ENCODE measurements at regions of chr6 and their contacts with region 1.

Region 1: DNA sequence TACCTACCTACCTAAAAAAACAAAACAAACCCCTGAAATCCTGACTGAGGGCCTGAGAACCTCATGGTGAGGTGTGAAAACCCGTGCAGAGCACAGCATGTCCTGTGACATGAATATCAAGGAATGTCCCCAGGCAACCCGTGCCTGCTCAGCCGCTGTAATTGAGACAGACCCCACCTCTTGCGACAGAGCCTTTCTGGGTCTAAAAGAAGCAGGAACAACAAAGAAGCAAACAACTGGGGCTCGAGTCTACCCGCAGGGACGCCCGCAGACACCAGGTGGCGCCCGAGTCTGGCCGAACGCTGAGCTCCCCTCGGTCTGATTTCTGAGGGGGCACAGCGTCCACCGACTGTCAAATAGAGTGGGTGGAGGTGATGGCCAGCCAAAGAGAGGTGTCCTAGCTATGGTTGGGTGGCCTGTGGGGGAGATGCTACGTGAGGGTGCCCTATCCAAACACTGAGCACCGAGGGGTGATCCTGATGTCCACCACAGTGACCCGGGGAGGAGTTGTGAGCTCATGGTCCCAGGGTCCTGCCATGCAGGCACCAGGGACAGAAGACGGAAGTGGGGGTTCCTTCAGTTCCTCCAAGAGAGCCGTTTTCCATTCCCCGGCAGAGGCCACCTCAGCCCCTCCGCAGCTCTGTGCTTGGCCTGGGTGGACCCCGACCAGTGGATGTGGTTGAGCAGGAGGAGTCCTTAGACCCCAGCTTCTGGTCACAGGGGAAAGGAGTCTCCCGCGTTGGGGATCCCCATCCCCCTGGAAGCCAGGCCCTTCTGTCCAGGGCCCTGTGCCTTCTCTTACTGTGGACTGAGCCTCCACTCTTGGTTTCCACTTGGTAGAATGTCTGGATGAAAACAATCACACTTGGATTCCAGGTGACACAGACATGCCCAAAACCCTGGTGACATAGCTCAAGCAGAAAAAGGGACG is 268.2 kb downstream of the CDC5L start:
- DNase-seq: peak; percentile 79
- H3K4me3 Mint-ChIP-seq: peak overlapping the region; percentile 25
- H3K27ac Mint-ChIP-seq: peak overlapping the region; percentile 83
- H3K4me1 Mint-ChIP-seq: peaks cover 11% of the 10 kb centered on the region
- H3K27me3 Mint-ChIP-seq: peaks cover 29% of the 10 kb centered on the region

Region 2: DNA sequence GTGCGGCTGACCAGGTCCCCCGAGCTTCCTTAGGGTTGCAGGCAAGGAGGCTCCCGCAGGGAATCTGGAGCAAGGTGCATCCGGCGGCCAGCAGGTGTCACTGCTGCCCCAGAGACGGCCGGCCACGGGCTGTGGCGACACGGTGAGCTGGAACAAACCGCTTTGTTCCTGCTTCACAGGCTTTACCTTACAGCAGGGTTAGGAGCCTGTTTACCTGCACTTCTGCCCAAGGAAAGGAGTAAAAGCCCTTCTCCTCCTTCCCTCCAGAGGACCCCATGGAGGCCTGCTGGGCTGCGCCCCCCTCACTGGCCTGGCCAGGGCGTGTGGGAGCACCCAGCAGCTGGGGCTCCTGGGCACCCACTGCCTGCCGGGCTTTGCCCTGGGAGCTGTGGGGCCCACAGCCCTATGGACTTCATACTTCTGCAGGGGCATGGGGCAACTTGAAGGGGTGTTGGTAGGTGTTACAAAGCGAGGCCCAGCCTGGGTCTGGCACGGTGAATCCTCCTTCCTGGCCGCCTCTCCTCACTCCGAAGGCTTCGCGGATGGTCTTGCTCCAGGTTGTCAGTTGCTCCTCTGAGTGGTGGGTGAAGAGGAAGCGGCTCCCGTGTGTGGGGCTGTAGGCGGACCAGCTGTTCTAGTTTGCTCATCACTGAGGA is 179.8 kb before region 1 on chr6:
- CTCF ChIA-PET with region 1: interaction called, 25 read pairs
- DNase-seq: peak; percentile 79
- H3K4me3 Mint-ChIP-seq: no peak overlapping the region
- H3K27ac Mint-ChIP-seq: no peak overlapping the region
- H3K4me1 Mint-ChIP-seq: no peaks in the 10 kb centered on the region
- H3K27me3 Mint-ChIP-seq: peaks cover 47% of the 10 kb centered on the region

Region 3: GRCh38 chr6:44563397-44563796 is 92.3 kb before region 1 on chr6:
- CTCF ChIA-PET with region 1: no interaction called
- DNase-seq: no peak
- H3K4me3 Mint-ChIP-seq: no peak overlapping the region
- H3K27ac Mint-ChIP-seq: no peak overlapping the region
- H3K4me1 Mint-ChIP-seq: peaks cover 6% of the 10 kb centered on the region
- H3K27me3 Mint-ChIP-seq: peaks cover 45% of the 10 kb centered on the region

Region 4: GRCh38 chr6:44593539-44593944 is 62.1 kb before region 1 on chr6:
- CTCF ChIA-PET with region 1: no interaction called
- DNase-seq: peak; percentile 73
- H3K4me3 Mint-ChIP-seq: no peak overlapping the region
- H3K27ac Mint-ChIP-seq: no peak overlapping the region
- H3K4me1 Mint-ChIP-seq: peaks cover 3% of the 10 kb centered on the region
- H3K27me3 Mint-ChIP-seq: peaks cover 29% of the 10 kb centered on the region

Region 5: GRCh38 chr6:44667668-44668390 is 12.2 kb after region 1 on chr6:
- CTCF ChIA-PET with region 1: interaction called, 10 read pairs
- DNase-seq: peak; percentile 51
- H3K4me3 Mint-ChIP-seq: no peak overlapping the region
- H3K27ac Mint-ChIP-seq: no peak overlapping the region
- H3K4me1 Mint-ChIP-seq: no peaks in the 10 kb centered on the region
- H3K27me3 Mint-ChIP-seq: peaks cover 30% of the 10 kb centered on the region

Region 6: DNA sequence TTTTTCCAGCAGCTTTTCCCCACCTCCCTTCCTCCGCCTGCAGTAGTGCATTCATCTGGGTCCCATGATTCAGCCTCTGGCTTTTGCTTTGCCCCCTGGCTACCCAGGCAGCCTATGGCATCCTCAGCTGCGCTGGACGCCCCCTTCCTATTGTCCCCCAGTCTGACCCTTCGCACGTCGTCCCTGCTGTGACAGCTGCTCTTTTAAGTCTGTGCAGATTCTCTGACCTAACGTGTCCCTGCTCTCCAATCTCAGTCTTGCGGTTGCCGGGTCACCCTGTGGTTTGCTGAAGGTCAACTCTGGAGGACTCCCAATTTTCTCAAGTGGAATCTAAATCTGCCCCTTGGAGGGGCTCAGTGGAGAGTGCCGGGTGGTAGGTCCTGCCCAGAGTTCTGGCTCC is 26.1 kb after region 1 on chr6:
- CTCF ChIA-PET with region 1: no interaction called
- DNase-seq: no peak
- H3K4me3 Mint-ChIP-seq: no peak overlapping the region
- H3K27ac Mint-ChIP-seq: no peak overlapping the region
- H3K4me1 Mint-ChIP-seq: no peaks in the 10 kb centered on the region
- H3K27me3 Mint-ChIP-seq: peaks cover 4% of the 10 kb centered on the region

Region 7: DNA sequence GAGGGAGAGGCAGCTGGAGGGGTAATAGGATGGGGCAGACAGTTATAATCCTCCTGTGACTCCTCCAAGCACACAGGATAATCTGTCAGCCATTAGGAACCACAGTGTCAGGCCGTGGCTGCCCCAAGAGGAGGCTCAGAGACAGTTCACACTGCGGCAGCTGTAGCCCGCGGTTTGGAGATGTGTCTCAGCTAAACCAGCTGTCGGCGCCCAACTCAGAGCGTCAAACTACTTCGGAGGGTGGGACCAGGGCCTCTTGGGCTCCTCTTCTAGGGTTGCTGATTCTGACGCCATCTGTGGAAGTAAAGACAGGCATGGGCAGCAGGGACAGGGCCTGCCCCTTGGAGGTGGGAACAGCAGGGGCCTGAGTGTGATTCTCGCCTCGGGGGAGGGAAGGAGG is 41.6 kb after region 1 on chr6:
- CTCF ChIA-PET with region 1: no interaction called
- DNase-seq: no peak
- H3K4me3 Mint-ChIP-seq: no peak overlapping the region
- H3K27ac Mint-ChIP-seq: no peak overlapping the region
- H3K4me1 Mint-ChIP-seq: peaks cover 5% of the 10 kb centered on the region
- H3K27me3 Mint-ChIP-seq: no peaks in the 10 kb centered on the region

Region 8: GRCh38 chr6:45421709-45422502 is 766.2 kb after region 1 on chr6:
- CTCF ChIA-PET with region 1: interaction called, 43 read pairs
- DNase-seq: peak; percentile 57
- H3K4me3 Mint-ChIP-seq: peak overlapping the region; percentile 91
- H3K27ac Mint-ChIP-seq: peak overlapping the region; percentile 87
- H3K4me1 Mint-ChIP-seq: peaks cover 35% of the 10 kb centered on the region
- H3K27me3 Mint-ChIP-seq: peaks cover 61% of the 10 kb centered on the region

Region 9: GRCh38 chr6:45922728-45923351 is 1267.2 kb after region 1 on chr6:
- CTCF ChIA-PET with region 1: interaction called, 28 read pairs
- DNase-seq: peak; percentile 77
- H3K4me3 Mint-ChIP-seq: no peak overlapping the region
- H3K27ac Mint-ChIP-seq: peak overlapping the region; percentile 11
- H3K4me1 Mint-ChIP-seq: peaks cover 22% of the 10 kb centered on the region
- H3K27me3 Mint-ChIP-seq: no peaks in the 10 kb centered on the region